K562 (cell line): ENCODE measurements at regions of chr7 and their contacts with region 1.

Region 1: DNA sequence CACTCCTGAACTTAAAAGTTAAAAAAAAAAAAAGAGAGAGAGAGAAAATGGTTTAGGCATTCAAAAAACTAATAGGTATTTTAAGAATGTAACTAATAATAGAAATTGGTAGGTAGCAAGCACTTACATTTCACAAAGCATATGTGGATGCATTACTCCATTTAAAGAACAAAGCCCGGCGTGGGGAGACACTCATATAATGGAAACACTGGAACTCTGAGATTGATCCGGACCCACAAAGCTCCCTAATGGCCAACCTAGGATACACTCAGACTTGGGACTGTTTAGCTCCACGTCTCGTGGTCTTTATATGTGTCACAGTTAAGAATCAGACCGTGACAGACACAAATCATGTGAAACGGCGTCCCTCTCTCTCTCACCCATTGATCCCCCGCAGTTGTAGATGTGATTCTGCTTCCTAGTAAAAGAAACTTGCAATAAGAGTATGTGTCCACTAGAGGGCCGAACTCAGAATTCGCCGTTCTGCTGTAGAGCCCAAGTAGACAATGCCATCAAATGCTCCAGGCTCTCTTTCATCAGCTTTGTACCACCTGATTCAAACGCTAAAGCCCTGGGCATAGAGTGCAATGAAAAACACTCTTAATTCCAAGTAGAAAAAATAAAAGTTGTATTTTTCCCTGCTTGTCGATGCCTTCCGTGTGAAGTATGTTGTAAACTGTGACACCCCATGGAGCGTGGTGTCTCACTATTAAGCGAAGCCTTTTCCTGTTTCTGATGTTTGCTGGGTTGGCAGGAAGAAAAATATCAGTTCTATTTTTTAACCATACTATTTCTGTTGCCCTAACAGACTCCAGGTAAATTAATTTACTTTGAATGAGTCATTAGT is 429.0 kb upstream of the MTPN start:
- DNase-seq: peak; percentile 58 to 77 (median 64)
- ATAC-seq: peak; percentile 96
- H3K4me3 ChIP-seq: no peak overlapping the region
- H3K27ac ChIP-seq: no peak overlapping the region
- H3K4me1 ChIP-seq: no peaks in the 10 kb centered on the region
- H3K27me3 ChIP-seq: no peaks in the 10 kb centered on the region
- CTCF ChIP-seq: peak; percentile 74 to 84 (median 74)
- EP300 ChIP-seq: no peak
- POLR2A ChIP-seq: no peak
- RAD21 ChIP-seq: peak; percentile 36 to 75

Region 2: GRCh38 chr7:136023134-136023875 is 382.8 kb before region 1 on chr7:
- CTCF ChIA-PET with region 1: no interaction called
- POLR2A ChIA-PET with region 1: no interaction called
- in situ Hi-C with region 1: no loop called
- intact Hi-C with region 1: loop called (anchors 10 kb)
- DNase-seq: no peak
- ATAC-seq: peak; percentile 10; the same call in 1 of the 3 replicates
- H3K4me3 ChIP-seq: no peak overlapping the region
- H3K27ac ChIP-seq: no peak overlapping the region
- H3K4me1 ChIP-seq: peaks cover 0 to 4% of the 10 kb centered on the region in 2 experiments; a peak in 2 of 5 replicates
- H3K27me3 ChIP-seq: no peaks in the 10 kb centered on the region
- CTCF ChIP-seq: peak in 1 of 3 experiments; percentile 11; a peak in 1 of 6 replicates
- EP300 ChIP-seq: no peak
- POLR2A ChIP-seq: no peak
- RAD21 ChIP-seq: 0 out of 4 replicates have a peak, but pooled peaks of 1 of the 2 experiments have one; percentile 13

Region 3: DNA sequence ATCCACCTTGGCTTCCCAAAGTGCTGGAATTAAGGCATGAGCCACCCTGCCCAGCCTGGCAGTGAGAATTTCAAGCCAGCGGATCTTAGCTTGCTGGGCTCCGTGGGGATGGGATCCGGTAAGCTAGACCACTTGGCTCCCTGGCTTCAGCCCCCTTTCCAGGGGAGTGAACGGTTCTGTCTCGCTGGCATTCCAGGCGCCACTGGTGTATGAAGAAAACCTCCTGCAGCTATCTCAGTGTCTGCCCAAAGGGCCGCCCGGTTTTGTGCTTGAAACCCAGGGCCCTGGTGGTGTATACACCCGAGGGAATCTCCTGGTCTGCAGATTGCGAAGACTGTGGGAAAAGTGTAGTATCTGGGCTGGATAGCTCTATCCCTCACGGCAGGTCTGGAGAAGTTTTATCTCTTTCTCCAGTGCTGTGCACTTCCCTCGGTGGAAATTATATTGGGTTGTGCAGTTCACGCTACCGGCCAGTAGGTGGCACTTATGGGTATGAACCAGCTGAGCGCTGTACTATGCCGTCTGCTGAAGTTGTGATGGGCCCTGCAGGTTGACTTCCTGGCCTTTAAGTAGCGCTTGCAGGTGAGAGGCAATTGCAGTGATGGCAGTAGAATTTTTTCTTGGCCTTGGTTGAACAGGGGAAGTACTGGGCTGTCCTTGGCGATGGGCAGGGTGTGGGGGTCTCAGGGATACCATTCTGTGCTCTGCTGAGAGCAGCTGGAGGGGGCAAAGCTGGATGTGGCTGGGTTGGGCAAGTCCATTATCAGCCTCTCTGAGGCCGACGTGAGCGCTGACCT is 291.0 kb before region 1 on chr7:
- CTCF ChIA-PET with region 1: no interaction called
- POLR2A ChIA-PET with region 1: no interaction called
- in situ Hi-C with region 1: no loop called
- intact Hi-C with region 1: loop called (anchors 10 kb)
- DNase-seq: peak; percentile 77 to 90 (median 82)
- ATAC-seq: peak; percentile 99
- H3K4me3 ChIP-seq: no peak overlapping the region
- H3K27ac ChIP-seq: no peak overlapping the region
- H3K4me1 ChIP-seq: peaks cover 0 to 25% of the 10 kb centered on the region in 2 experiments; a peak in 3 of 5 replicates
- H3K27me3 ChIP-seq: no peaks in the 10 kb centered on the region
- CTCF ChIP-seq: peak; percentile 89 to 95 (median 93)
- EP300 ChIP-seq: peak; percentile 47
- POLR2A ChIP-seq: no peak
- RAD21 ChIP-seq: peak; percentile 71 to 83

Region 4: GRCh38 chr7:136687693-136688322 is 281.7 kb after region 1 on chr7:
- CTCF ChIA-PET with region 1: no interaction called
- POLR2A ChIA-PET with region 1: no interaction called
- in situ Hi-C with region 1: no loop called
- intact Hi-C with region 1: loop called (anchors 5 kb)
- DNase-seq: peak; percentile 24 to 53 (median 50)
- ATAC-seq: peak; percentile 67
- H3K4me3 ChIP-seq: no peak overlapping the region
- H3K27ac ChIP-seq: no peak overlapping the region
- H3K4me1 ChIP-seq: no peaks in the 10 kb centered on the region
- H3K27me3 ChIP-seq: no peaks in the 10 kb centered on the region
- CTCF ChIP-seq: peak; percentile 46 to 75 (median 60); a peak in 5 of 6 replicates
- EP300 ChIP-seq: no peak
- POLR2A ChIP-seq: no peak
- RAD21 ChIP-seq: peak; percentile 51 to 62

Region 5: DNA sequence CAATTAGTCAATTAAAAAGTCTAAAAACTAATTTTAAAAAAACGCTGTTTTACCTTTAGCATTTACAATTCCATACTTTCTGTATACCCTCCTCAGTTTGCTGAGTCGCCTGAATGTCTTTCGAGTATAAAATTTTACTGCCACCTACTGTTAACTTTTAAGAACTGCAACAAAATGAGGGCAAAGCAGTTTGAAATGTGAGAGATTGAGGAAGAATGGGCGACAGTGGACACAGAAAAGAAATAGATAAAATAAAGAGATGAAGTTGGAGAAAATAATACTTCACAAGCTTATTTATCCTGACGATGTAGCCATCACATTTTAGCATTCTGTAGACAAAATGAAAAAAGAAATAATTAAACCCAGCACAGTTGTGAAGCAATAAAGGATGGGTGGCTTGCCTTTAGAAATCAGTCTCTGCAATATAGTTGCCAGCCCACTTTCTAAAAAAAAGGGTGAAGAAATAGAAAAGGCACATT is 1048.1 kb after region 1 on chr7:
- CTCF ChIA-PET with region 1: no interaction called
- POLR2A ChIA-PET with region 1: no interaction called
- in situ Hi-C with region 1: no loop called
- intact Hi-C with region 1: loop called (anchors 10 kb)
- DNase-seq: peak; percentile 32 to 60 (median 54)
- ATAC-seq: peak; percentile 85
- H3K4me3 ChIP-seq: no peak overlapping the region
- H3K27ac ChIP-seq: no peak overlapping the region
- H3K4me1 ChIP-seq: no peaks in the 10 kb centered on the region
- H3K27me3 ChIP-seq: no peaks in the 10 kb centered on the region
- CTCF ChIP-seq: peak; percentile 53 to 76 (median 61); a peak in 5 of 6 replicates
- EP300 ChIP-seq: no peak
- POLR2A ChIP-seq: no peak
- RAD21 ChIP-seq: peak; percentile 78 to 82

Region 6: DNA sequence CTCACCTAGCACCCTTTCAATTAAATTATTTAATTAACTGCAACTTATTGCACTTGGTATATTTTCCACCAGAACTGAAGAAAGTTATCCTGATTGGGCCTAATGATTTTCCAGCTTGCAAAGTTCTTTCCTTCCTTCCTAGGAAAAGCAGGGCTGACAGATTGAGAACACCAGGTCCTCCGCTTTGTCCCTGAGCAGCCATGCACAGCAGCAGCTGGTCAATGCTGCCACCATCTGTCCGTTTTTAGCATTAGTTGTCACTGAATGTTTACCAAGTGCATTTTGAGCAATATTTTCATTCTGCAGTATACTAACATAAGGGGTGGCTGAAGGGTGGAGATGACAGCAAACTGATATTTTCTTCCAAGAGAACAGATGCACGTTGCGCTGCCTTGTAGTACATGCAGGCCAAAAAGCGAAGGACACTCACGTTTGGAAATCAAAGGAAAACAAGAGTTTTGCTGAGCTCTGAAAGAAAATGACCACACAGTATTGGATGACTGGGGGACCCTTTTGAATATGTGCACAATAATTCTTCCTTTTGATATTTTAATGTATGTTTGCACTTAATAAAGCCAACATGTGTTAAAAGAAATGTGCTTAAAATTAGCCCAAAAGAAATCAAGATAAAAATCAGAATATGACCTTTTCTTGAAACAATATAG is 1186.2 kb after region 1 on chr7:
- CTCF ChIA-PET with region 1: no interaction called
- POLR2A ChIA-PET with region 1: no interaction called
- in situ Hi-C with region 1: no loop called
- intact Hi-C with region 1: loop called (anchors 2 kb)
- DNase-seq: peak; percentile 48 to 76 (median 64)
- ATAC-seq: peak; percentile 94
- H3K4me3 ChIP-seq: no peak overlapping the region
- H3K27ac ChIP-seq: no peak overlapping the region
- H3K4me1 ChIP-seq: peaks cover 0 to 10% of the 10 kb centered on the region in 2 experiments; a peak in 3 of 5 replicates
- H3K27me3 ChIP-seq: no peaks in the 10 kb centered on the region
- CTCF ChIP-seq: peak; percentile 86 to 92 (median 92)
- EP300 ChIP-seq: no peak
- POLR2A ChIP-seq: no peak
- RAD21 ChIP-seq: peak; percentile 93